ENCODE measurements at regions of chr15 and their contacts with region 1.

Region 1: GRCh38 chr15:90013503-90013937 is 12.4 kb downstream of the ZNF710 start:
- DNase-seq: peak in 3 of 9 experiments; percentile 42 to 83 (median 69)
- ATAC-seq: peak; percentile 90
- H3K4me3 ChIP-seq: peak overlapping the region; percentile 9 to 12
- H3K4me3 Mint-ChIP-seq: peak overlapping the region; percentile 65
- H3K27ac ChIP-seq: peak overlapping the region in 1 of 2 experiments; percentile 53
- H3K27ac Mint-ChIP-seq: peak overlapping the region; percentile 52
- H3K4me1 ChIP-seq: peaks cover 34% of the 10 kb centered on the region
- H3K4me1 Mint-ChIP-seq: peaks cover 54% of the 10 kb centered on the region
- H3K27me3 ChIP-seq: no peaks in the 10 kb centered on the region
- H3K27me3 Mint-ChIP-seq: no peaks in the 10 kb centered on the region
- CTCF ChIP-seq: no peak

Region 2: DNA sequence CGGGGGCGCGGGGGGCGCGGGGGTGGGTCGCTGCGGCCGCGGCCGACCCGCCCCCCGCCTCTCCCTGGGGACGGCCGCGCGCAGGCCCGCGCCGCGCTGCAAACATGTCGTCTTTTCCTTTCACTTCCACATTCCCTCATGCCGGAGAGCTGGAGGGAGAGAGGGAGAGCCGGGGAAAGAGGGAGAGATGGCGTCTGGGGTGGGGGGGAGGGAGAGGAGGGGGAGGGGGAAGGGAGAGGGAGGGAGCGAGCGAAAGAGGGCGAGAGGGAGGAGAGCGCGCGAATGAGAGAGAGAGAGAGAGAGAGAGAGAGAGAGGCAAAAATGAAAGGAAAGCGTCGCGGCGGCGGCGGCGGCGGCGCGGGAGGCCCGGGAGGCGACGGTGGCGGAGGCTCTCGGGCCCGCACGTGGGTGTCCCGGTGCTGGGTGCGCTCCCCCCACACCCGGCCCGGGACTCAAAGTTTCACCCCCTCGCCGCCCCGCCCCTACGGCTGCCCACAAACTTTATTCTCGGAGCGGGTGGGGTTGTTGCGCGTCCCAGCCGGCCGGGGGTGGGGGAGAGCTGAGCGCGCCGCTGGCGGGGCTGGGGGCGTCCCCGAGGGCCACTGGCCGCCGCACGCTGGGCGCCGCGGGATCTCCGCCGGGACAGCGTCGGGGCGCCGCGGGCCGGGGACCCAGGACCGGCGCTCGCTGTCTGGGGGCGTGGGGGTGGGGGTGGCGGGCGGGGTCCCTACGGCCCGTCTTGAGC is 11.7 kb before region 1 on chr15:
- CTCF ChIA-PET with region 1: interaction called, 5 read pairs
- POLR2A ChIA-PET with region 1: interaction called, 10 read pairs
- intact Hi-C with region 1: no loop called
- DNase-seq: peak; percentile 22 to 82 (median 58)
- ATAC-seq: peak; percentile 65
- H3K4me3 ChIP-seq: peak overlapping the region; percentile 48 to 61
- H3K4me3 Mint-ChIP-seq: peak overlapping the region; percentile 88
- H3K27ac ChIP-seq: peak overlapping the region in 1 of 2 experiments; percentile 53
- H3K27ac Mint-ChIP-seq: peak overlapping the region; percentile 79
- H3K4me1 ChIP-seq: peaks cover 27% of the 10 kb centered on the region
- H3K4me1 Mint-ChIP-seq: peaks cover 51% of the 10 kb centered on the region
- H3K27me3 ChIP-seq: no peaks in the 10 kb centered on the region
- H3K27me3 Mint-ChIP-seq: no peaks in the 10 kb centered on the region
- CTCF ChIP-seq: no peak

Region 3: GRCh38 chr15:90742087-90742486 is 728.6 kb after region 1 on chr15:
- CTCF ChIA-PET with region 1: no interaction called
- POLR2A ChIA-PET with region 1: no interaction called
- intact Hi-C with region 1: no loop called
- DNase-seq: peak in 1 of 9 experiments; percentile 10
- ATAC-seq: no peak
- H3K4me3 ChIP-seq: no peak overlapping the region
- H3K4me3 Mint-ChIP-seq: no peak overlapping the region
- H3K27ac ChIP-seq: no peak overlapping the region
- H3K27ac Mint-ChIP-seq: no peak overlapping the region
- H3K4me1 ChIP-seq: no peaks in the 10 kb centered on the region
- H3K4me1 Mint-ChIP-seq: peaks cover 6% of the 10 kb centered on the region
- H3K27me3 ChIP-seq: no peaks in the 10 kb centered on the region
- H3K27me3 Mint-ChIP-seq: no peaks in the 10 kb centered on the region
- CTCF ChIP-seq: no peak

Measured in CD8-positive, alpha-beta T cell (primary cell).